GM13977 (cell line): ENCODE measurements at regions of chr1 and their contacts with region 1.

Region 1: DNA sequence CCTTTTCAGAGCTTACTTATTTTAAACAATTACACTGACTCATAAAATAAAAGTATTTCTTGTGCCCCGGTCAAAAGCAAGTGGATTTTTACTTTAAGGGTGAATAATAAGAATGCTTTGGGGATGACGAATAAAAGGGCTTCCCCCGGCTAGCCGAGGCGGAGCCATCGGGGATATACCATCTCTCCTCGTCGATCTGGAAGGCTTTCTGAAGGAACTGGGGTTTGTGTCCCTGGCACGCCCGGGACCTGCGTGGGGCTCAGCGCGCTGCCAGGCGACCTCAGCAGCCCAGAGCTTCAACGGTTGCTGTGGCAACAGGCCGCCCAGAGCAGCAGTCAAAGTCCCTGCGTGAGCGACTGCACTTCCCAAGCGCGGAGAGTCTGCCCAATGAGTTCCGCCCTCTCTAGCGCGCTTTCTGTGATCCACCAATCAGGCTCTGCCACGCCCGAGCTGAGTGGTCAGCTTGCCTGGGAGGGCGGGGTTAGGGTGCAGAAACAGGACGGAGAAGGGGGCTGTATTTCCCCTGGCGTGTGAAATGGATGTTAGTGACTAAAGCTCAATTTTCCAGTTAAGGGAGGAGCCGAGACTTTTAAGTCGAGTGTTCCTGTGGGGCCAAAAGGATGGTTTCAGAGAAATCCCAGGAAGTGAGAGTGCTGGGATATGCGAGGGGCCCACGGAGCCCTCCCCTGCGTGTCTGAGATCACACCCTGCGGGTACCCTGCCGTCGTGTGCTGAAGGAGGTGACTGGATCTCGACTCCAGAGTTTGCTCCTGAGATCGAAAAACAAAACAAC is 33.0 kb upstream of the MGST3 start:
- DNase-seq: peak; percentile 91
- CTCF ChIP-seq: no peak

Region 2: GRCh38 chr1:165403835-165404482 is 194.1 kb before region 1 on chr1:
- in situ Hi-C with region 1: loop called (anchors 5 kb)
- DNase-seq: peak; percentile 36
- CTCF ChIP-seq: peak; percentile 54

Region 3: DNA sequence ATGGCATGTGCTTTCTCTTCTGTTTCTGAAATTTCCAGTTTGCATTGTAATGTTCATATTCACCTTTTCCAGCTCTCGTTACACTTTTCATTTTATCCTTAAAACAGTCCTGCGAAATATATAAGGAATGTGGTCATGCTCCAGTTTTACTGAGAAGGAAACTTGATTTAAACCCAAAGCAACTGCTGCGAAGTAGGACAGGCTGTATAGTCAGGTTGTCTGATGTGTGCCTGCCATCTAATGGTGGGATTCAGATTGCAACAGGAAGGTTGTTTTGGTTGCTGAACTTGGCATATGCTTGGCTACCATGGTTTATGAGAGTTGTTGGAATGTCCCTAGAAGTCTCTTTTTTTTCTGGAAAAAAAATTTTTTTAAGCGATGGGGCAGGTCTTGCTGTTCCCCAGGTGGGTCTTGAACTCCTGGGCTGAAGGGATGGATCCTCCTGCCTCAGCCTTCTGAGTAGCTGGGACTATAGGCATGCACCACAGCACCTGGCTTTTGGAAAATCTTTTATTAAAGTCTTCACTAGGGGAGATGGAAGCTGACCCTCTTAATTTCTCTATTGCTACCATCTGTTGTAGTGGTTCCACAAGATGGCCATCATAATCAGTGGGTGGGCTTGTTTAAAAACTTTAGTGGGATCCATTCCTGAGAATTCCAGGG is 316.2 kb after region 1 on chr1:
- in situ Hi-C with region 1: loop called (anchors 10 kb)
- DNase-seq: peak; percentile 74
- CTCF ChIP-seq: peak; percentile 92